IMR-90 (cell line): ENCODE measurements at regions of chr14 and their contacts with region 1.

Region 1: GRCh38 chr14:31159682-31160296 is 47.8 kb downstream of the HECTD1 start:
- DNase-seq: peak; percentile 57
- ATAC-seq: peak; percentile 81
- H3K4me3 ChIP-seq: no peak overlapping the region
- H3K27ac ChIP-seq: peak overlapping the region; percentile 71
- H3K4me1 ChIP-seq: peaks cover 11% of the 10 kb centered on the region
- H3K27me3 ChIP-seq: no peaks in the 10 kb centered on the region
- CTCF ChIP-seq: no peak
- POLR2A ChIP-seq: no peak
- RAD21 ChIP-seq: no peak

Region 2: GRCh38 chr14:31122098-31122611 is 37.6 kb before region 1 on chr14:
- CTCF ChIA-PET with region 1: no interaction called
- POLR2A ChIA-PET with region 1: no interaction called
- dilution Hi-C with region 1: no loop called
- in situ Hi-C with region 1: no loop called
- intact Hi-C with region 1: loop called (anchors 5 kb)
- DNase-seq: peak; percentile 23
- ATAC-seq: no peak
- H3K4me3 ChIP-seq: no peak overlapping the region
- H3K27ac ChIP-seq: no peak overlapping the region
- H3K4me1 ChIP-seq: no peaks in the 10 kb centered on the region
- H3K27me3 ChIP-seq: no peaks in the 10 kb centered on the region
- CTCF ChIP-seq: no peak
- POLR2A ChIP-seq: no peak
- RAD21 ChIP-seq: no peak